B cell (primary cell): ENCODE measurements at regions of chr11 and their contacts with region 1.

Region 1: DNA sequence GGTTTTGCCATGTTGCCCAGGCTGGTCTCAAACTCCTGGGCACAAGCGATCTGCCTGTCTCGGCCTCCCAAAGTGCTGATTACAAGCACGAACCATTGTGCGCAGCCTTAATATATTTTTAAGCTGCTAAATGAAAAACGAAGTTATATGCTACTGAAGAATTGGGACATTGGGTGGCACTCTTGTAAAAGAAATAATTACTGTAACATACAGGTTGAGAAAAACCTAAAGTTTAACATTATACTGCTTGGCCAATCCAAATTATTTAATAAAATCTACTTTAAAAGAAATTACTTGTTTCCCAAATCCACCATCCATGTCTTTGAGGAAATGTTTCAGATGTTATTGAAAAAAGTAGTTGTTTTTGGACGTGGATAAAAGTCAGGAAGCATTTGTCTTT is 37.9 kb upstream of the ARHGAP32 start:
- DNase-seq: peak; percentile 4
- ATAC-seq: no peak
- H3K4me3 ChIP-seq: no peak overlapping the region
- H3K4me3 Mint-ChIP-seq: no peak overlapping the region
- H3K27ac ChIP-seq: no peak overlapping the region
- H3K27ac Mint-ChIP-seq: no peak overlapping the region
- H3K4me1 ChIP-seq: no peaks in the 10 kb centered on the region
- H3K4me1 Mint-ChIP-seq: no peaks in the 10 kb centered on the region
- H3K27me3 ChIP-seq: no peaks in the 10 kb centered on the region
- H3K27me3 Mint-ChIP-seq: no peaks in the 10 kb centered on the region
- CTCF ChIP-seq: no peak

Region 2: GRCh38 chr11:129100193-129100592 is 129.8 kb before region 1 on chr11:
- CTCF ChIA-PET with region 1: no interaction called
- POLR2A ChIA-PET with region 1: no interaction called
- intact Hi-C with region 1: no loop called
- DNase-seq: no peak
- ATAC-seq: no peak
- H3K4me3 ChIP-seq: no peak overlapping the region
- H3K4me3 Mint-ChIP-seq: no peak overlapping the region
- H3K27ac ChIP-seq: no peak overlapping the region
- H3K27ac Mint-ChIP-seq: no peak overlapping the region
- H3K4me1 ChIP-seq: no peaks in the 10 kb centered on the region
- H3K4me1 Mint-ChIP-seq: no peaks in the 10 kb centered on the region
- H3K27me3 ChIP-seq: no peaks in the 10 kb centered on the region
- H3K27me3 Mint-ChIP-seq: no peaks in the 10 kb centered on the region
- CTCF ChIP-seq: no peak

Region 3: DNA sequence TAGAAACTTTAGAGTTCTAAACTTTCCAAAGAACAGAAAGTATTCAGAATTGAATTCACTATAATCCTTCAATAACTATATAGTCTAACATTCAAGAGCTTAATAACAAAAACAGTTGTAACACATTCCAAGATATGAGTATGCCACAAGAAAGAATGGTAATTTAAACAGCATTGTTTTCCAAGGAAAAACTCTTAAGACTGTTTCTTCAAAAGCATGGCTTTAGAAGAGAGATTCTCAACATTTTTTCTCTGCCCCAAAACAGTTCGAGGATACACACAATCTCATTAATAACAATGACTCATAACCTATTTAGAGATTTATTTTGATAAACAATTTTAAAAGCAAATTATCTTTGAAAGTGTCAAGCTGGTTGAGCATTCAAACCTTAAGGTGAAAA is 21.1 kb before region 1 on chr11:
- CTCF ChIA-PET with region 1: no interaction called
- POLR2A ChIA-PET with region 1: no interaction called
- intact Hi-C with region 1: no loop called
- DNase-seq: no peak
- ATAC-seq: no peak
- H3K4me3 ChIP-seq: no peak overlapping the region
- H3K4me3 Mint-ChIP-seq: no peak overlapping the region
- H3K27ac ChIP-seq: no peak overlapping the region
- H3K27ac Mint-ChIP-seq: no peak overlapping the region
- H3K4me1 ChIP-seq: no peaks in the 10 kb centered on the region
- H3K4me1 Mint-ChIP-seq: peaks cover 1% of the 10 kb centered on the region
- H3K27me3 ChIP-seq: no peaks in the 10 kb centered on the region
- H3K27me3 Mint-ChIP-seq: peaks cover 6% of the 10 kb centered on the region
- CTCF ChIP-seq: no peak

Region 4: GRCh38 chr11:129331871-129332274 is 101.9 kb after region 1 on chr11:
- CTCF ChIA-PET with region 1: interaction called, 14 read pairs
- POLR2A ChIA-PET with region 1: no interaction called
- intact Hi-C with region 1: loop called (anchors 5 kb)
- DNase-seq: peak; percentile 63
- ATAC-seq: peak; percentile 43
- H3K4me3 ChIP-seq: no peak overlapping the region
- H3K4me3 Mint-ChIP-seq: no peak overlapping the region
- H3K27ac ChIP-seq: no peak overlapping the region
- H3K27ac Mint-ChIP-seq: no peak overlapping the region
- H3K4me1 ChIP-seq: no peaks in the 10 kb centered on the region
- H3K4me1 Mint-ChIP-seq: peaks cover 3% of the 10 kb centered on the region
- H3K27me3 ChIP-seq: no peaks in the 10 kb centered on the region
- H3K27me3 Mint-ChIP-seq: peaks cover 3% of the 10 kb centered on the region
- CTCF ChIP-seq: peak; percentile 78